Breast epithelium (tissue), 4 donors: ENCODE measurements at regions of chr7 and their contacts with region 1.

Region 1: DNA sequence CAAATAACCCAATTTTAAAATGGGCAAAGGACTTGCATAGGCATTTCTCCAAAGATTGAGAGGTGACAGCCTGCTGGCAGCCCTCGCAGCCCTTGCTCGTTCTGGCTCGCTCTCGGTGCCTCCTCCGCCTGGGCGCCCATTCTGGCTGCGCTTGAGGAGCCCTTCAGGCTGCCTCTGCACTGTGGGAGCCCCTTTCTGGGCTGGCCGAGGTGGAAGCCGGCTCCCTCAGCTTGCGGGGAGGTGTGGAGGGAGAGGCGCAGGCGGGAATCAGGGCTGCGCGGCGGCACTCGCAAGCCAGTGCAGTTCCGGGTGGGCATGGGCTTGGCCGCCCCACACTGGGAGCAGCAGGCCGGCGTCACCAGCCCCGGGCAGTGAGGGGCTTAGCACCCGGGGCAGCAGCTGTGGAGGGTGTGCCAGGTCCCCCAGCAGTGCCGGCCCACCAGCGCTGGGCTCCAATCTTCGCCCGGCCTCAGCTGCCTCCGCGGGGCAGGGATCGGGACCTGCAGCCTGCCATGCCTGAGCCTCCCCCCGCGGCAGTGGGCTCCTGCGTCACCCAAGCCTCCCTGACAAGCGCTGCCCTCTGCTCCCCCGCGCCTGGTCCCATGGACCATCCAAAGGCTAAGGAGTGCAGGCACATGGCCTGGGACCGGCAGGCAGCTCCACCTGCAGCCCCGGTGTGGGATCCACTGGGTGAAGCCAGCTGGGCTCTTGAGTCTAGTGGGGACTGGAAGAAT is 54.0 kb upstream of the GALNT17 start:
- DNase-seq: no peak
- H3K4me3 ChIP-seq: no peak overlapping the region
- H3K27ac ChIP-seq: no peak overlapping the region
- H3K4me1 ChIP-seq: no peaks in the 10 kb centered on the region
- H3K27me3 ChIP-seq: no peaks in the 10 kb centered on the region
- CTCF ChIP-seq: no peak
- POLR2A ChIP-seq: no peak

Region 2: GRCh38 chr7:71005109-71005508 is 72.8 kb before region 1 on chr7:
- intact Hi-C with region 1: loop called (anchors 2 kb)
- DNase-seq: no peak
- H3K4me3 ChIP-seq: no peak overlapping the region
- H3K27ac ChIP-seq: no peak overlapping the region
- H3K4me1 ChIP-seq: no peaks in the 10 kb centered on the region
- H3K27me3 ChIP-seq: no peaks in the 10 kb centered on the region
- CTCF ChIP-seq: no peak
- POLR2A ChIP-seq: no peak

Region 3: DNA sequence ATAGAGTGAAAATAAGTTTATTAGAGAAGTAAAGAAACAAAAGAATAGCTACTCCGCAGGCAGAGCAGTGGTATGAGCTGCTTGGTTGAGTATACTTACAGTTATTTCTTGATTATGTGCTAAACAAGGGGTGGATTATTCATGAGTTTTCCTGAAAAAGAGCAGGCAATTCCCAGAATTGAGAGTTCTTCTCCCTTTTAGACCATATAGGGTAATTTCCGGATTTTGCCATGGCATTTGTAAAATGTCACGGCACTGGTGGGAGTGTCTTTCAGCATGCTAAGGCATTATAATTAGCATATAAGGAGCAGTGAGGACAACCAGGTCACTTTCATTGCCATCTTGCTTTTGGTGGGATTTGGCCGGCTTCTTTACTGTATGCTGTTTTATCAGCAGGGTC is 28.3 kb after region 1 on chr7:
- intact Hi-C with region 1: no loop called
- DNase-seq: no peak
- H3K4me3 ChIP-seq: no peak overlapping the region
- H3K27ac ChIP-seq: no peak overlapping the region
- H3K4me1 ChIP-seq: no peaks in the 10 kb centered on the region
- H3K27me3 ChIP-seq: no peaks in the 10 kb centered on the region
- CTCF ChIP-seq: no peak
- POLR2A ChIP-seq: no peak